ENCODE measurements at regions of chr4 and their contacts with region 1.

Region 1: GRCh38 chr4:128287871-128288688 is 467 bp upstream of the PGRMC2 start:
- DNase-seq: peak; percentile 98
- H3K4me3 ChIP-seq: peak overlapping the region; percentile 80
- H3K27ac ChIP-seq: peak overlapping the region; percentile 95
- H3K27me3 ChIP-seq: no peaks in the 10 kb centered on the region
- CTCF ChIP-seq: peak; percentile 37

Region 2: GRCh38 chr4:128225148-128225547 is 62.9 kb before region 1 on chr4:
- CTCF ChIA-PET with region 1: interaction called, 4 read pairs
- POLR2A ChIA-PET with region 1: interaction called, 11 read pairs
- DNase-seq: peak; percentile 69
- H3K4me3 ChIP-seq: no peak overlapping the region
- H3K27ac ChIP-seq: no peak overlapping the region
- H3K27me3 ChIP-seq: no peaks in the 10 kb centered on the region
- CTCF ChIP-seq: no peak

Region 3: DNA sequence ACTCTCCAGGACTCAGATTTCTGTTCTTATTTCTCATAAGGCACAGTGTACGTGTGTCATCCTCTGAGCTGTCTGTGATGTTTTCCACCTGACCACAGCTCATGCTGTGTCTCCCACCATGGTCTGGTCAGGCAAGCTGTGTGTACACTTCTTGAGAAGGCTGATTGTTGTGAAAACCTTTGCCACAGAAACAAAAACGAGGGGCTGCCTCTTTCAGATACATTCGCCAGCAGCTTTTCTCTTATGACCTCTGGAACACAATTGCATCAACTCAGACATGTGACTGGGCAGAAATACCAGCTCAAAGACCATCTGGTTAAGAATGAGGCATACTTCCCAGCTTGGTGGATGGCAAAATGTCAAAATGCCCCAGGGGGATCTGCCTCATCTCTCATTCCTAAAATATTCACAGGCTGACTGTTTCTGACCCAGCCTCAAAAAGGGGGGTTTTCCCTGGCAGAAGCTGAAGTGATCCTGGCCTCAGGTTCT is 46.6 kb before region 1 on chr4:
- CTCF ChIA-PET with region 1: no interaction called
- POLR2A ChIA-PET with region 1: interaction called, 23 read pairs
- DNase-seq: peak; percentile 98
- H3K4me3 ChIP-seq: no peak overlapping the region
- H3K27ac ChIP-seq: peak overlapping the region; percentile 95
- H3K27me3 ChIP-seq: no peaks in the 10 kb centered on the region
- CTCF ChIP-seq: no peak

Region 4: DNA sequence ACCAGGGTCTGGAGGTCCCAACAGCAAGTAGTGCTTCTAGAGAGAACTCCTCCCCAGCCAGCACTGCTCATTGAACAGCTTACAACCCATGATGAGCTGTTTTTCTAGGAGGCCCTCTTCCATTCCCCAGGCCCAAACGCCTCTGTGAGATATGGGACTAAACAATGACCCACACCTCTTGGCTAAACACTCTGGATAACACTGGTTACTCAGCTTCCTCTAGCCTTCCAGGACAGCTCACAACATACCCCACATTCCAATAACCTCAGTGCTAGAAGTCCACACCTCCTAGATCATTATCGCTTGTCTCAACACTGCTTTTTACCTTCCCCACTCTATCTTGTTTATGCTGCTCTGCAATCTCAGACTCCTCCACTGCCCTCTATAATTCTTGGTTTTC is 34.9 kb after region 1 on chr4:
- CTCF ChIA-PET with region 1: no interaction called
- POLR2A ChIA-PET with region 1: interaction called, 11 read pairs
- DNase-seq: no peak
- H3K4me3 ChIP-seq: no peak overlapping the region
- H3K27ac ChIP-seq: peak overlapping the region; percentile 82
- H3K27me3 ChIP-seq: no peaks in the 10 kb centered on the region
- CTCF ChIP-seq: no peak

Region 5: DNA sequence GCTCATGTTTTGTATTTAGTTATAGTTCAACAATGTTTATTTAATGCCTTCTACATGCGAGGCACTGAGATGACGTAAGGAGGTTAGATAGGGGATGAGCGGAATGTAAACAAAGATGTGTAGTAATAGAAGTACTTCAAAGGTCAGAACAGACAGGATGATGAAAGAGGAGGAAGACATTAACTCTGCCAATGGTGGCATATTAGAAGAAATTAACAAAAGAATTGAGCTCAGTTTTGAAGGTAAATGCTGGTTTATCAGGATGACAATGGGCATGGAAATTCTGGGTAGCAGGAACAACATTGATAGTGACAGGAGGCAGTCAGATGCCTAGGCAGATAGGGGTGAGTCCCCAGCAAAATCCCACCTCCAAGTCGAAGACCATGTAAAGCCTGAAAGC is 61.8 kb after region 1 on chr4:
- CTCF ChIA-PET with region 1: interaction called, 3 read pairs
- POLR2A ChIA-PET with region 1: interaction called, 23 read pairs
- DNase-seq: peak; percentile 91
- H3K4me3 ChIP-seq: no peak overlapping the region
- H3K27ac ChIP-seq: peak overlapping the region; percentile 40
- H3K27me3 ChIP-seq: no peaks in the 10 kb centered on the region
- CTCF ChIP-seq: no peak

Region 6: DNA sequence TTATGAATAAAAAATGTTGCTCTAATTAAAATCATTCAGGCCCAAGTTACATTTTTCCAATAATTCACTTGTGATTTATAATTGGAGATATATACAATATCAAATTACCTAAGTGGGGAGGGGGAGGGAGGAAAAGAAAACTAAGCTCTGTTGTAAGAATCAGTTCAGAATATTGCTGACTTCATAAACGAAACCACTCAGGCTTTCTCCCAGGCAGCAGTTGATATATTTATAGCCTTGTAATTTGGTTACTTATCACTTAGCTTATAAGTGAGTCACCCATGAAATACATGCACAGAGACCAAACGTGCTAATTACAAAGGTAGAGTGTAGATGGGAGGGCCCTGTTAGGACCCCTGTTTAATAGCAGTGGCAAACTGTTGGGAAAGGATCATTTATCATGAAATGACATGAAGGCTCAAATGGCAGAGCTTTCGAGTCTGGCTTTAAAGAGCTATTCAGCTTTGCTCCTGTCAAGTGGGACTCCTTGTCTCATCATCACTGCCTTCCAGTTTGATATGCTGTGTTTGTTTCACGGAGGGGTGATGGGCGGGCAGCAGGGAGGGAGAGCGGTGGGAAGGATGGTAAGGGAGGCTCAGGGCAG is 105.1 kb after region 1 on chr4:
- CTCF ChIA-PET with region 1: no interaction called
- POLR2A ChIA-PET with region 1: no interaction called
- DNase-seq: no peak
- H3K4me3 ChIP-seq: no peak overlapping the region
- H3K27ac ChIP-seq: no peak overlapping the region
- H3K27me3 ChIP-seq: no peaks in the 10 kb centered on the region
- CTCF ChIP-seq: no peak

Region 7: DNA sequence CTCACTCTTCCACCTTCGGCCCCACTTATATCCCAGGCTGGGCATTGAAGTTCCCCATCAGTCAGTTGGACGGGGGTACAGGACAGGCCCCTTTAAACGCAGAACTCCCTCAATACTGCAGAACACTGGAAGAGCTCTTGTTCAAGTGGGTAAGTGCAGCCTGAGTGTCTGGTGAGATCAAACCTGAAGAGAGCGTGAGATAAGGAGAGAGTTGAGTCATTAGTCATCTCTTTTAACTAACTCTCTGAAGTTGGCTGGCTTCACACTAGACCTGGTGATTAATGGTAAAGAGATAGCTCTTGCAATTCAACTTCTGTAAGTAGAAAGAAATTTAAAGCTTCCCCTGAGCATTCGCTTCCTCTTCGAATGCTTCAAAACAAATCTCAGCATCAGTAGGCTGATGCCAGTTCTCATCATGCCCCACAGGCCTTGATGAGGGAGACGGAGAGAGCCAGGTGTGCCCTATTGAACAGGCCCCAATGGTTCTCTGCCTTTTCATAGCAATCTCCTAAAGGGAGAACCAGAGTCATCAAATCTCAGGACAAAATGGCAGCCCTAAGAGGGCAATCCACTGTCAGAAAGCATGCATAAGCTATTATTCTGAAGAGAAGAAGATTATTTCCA is 480.4 kb after region 1 on chr4:
- CTCF ChIA-PET with region 1: no interaction called
- POLR2A ChIA-PET with region 1: no interaction called
- DNase-seq: no peak
- H3K4me3 ChIP-seq: no peak overlapping the region
- H3K27ac ChIP-seq: no peak overlapping the region
- H3K27me3 ChIP-seq: no peaks in the 10 kb centered on the region
- CTCF ChIP-seq: no peak